Activated naive CD4-positive, alpha-beta T cell treated with anti-CD3 and anti-CD28 coated beads for 36 hours (primary cell): ENCODE measurements at regions of chr6 and their contacts with region 1.

Region 1: DNA sequence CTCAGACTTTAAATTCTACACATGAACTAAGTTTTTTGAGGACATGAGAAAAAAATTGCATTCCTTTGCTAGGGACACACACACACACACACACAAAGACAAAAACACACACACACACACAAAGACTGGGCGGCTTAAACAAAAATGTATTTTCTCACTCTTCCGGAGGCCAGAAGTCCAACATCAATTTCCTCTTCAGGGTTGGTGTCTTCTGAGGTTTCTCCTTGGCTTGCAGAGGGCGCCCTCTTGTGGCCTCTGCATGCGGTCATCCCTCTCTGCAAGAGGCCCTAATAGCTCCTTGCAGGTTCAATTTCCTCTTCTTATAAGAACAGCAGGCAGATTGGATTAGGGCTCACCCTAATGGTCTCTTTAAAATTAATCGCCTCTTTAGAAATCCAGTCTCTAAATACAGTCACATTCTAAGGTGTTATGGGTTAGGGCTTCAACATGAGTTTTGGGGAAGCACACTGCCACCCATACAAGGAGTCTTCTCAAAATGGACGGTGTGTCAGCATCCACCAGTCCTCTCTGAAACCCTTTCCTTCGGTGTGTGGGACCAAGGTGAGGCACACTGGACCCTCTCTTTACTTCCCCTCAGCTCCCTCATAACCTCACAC is 61.4 kb downstream of the GPR6 start:
- DNase-seq: peak; percentile 92
- H3K4me3 Mint-ChIP-seq: peak overlapping the region; percentile 84
- H3K27ac Mint-ChIP-seq: peak overlapping the region; percentile 96
- H3K4me1 Mint-ChIP-seq: peaks cover 12% of the 10 kb centered on the region
- H3K27me3 Mint-ChIP-seq: no peaks in the 10 kb centered on the region

Region 2: GRCh38 chr6:109187399-109188114 is 851.9 kb before region 1 on chr6:
- CTCF ChIA-PET with region 1: interaction called, 3 read pairs
- intact Hi-C with region 1: loop called (anchors 1 kb)
- DNase-seq: peak; percentile 70
- H3K4me3 Mint-ChIP-seq: no peak overlapping the region
- H3K27ac Mint-ChIP-seq: no peak overlapping the region
- H3K4me1 Mint-ChIP-seq: no peaks in the 10 kb centered on the region
- H3K27me3 Mint-ChIP-seq: peaks cover 11% of the 10 kb centered on the region

Region 3: DNA sequence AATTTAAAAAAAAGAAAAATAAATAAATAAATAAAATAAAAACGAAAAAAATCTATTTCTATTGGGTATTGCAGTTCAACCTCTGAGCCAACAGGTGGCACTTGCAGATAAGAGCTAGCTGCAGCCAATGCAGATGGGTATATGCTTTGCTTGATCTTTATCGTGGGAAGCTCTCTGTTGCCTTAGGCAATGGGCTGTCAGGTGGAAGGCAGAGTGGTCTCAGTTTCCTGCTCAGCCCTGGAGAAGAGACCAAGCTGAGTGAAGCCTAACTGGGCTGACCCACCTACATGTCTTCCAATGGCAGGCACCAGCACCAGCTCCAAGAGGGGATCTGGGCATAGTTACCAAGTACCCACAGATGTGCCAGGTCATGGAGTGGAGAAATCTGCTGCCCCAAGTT is 443.5 kb before region 1 on chr6:
- CTCF ChIA-PET with region 1: interaction called, 23 read pairs
- intact Hi-C with region 1: loop called (anchors 1 kb)
- DNase-seq: peak; percentile 22
- H3K4me3 Mint-ChIP-seq: no peak overlapping the region
- H3K27ac Mint-ChIP-seq: no peak overlapping the region
- H3K4me1 Mint-ChIP-seq: peaks cover 4% of the 10 kb centered on the region
- H3K27me3 Mint-ChIP-seq: no peaks in the 10 kb centered on the region

Region 4: GRCh38 chr6:109705258-109705657 is 334.2 kb before region 1 on chr6:
- CTCF ChIA-PET with region 1: interaction called, 134 read pairs
- intact Hi-C with region 1: loop called (anchors 1 kb)
- DNase-seq: peak; percentile 91
- H3K4me3 Mint-ChIP-seq: no peak overlapping the region
- H3K27ac Mint-ChIP-seq: no peak overlapping the region
- H3K4me1 Mint-ChIP-seq: peaks cover 9% of the 10 kb centered on the region
- H3K27me3 Mint-ChIP-seq: no peaks in the 10 kb centered on the region

Region 5: DNA sequence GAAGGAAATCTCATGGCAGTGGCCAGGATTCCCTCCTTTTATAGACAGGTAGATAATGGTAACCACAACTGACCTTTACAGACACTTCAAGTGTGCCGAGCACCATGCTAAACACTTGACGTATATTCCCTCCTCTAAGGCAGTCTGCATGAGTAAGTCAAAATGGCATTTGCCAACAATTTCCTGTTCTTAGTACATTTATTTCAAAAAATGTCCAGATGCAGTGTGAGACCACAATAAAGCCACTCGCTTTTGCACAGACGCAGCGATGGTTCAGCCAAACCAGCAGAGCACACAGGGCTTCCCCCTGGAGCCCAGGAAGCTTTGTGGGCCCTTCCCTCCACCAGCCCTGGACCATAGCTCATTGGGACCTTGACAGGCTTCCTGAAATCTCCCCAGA is 77.8 kb before region 1 on chr6:
- CTCF ChIA-PET with region 1: interaction called, 4 read pairs
- intact Hi-C with region 1: loop called (anchors 5 kb)
- DNase-seq: no peak
- H3K4me3 Mint-ChIP-seq: no peak overlapping the region
- H3K27ac Mint-ChIP-seq: no peak overlapping the region
- H3K4me1 Mint-ChIP-seq: no peaks in the 10 kb centered on the region
- H3K27me3 Mint-ChIP-seq: no peaks in the 10 kb centered on the region

Region 6: GRCh38 chr6:110029144-110029543 is 10.3 kb before region 1 on chr6:
- CTCF ChIA-PET with region 1: interaction called, 35 read pairs
- intact Hi-C with region 1: no loop called
- DNase-seq: no peak
- H3K4me3 Mint-ChIP-seq: no peak overlapping the region
- H3K27ac Mint-ChIP-seq: no peak overlapping the region
- H3K4me1 Mint-ChIP-seq: no peaks in the 10 kb centered on the region
- H3K27me3 Mint-ChIP-seq: no peaks in the 10 kb centered on the region

Region 7: GRCh38 chr6:110389689-110390382 is 350.4 kb after region 1 on chr6:
- CTCF ChIA-PET with region 1: interaction called, 74 read pairs
- intact Hi-C with region 1: loop called (anchors 1 kb)
- DNase-seq: no peak
- H3K4me3 Mint-ChIP-seq: no peak overlapping the region
- H3K27ac Mint-ChIP-seq: no peak overlapping the region
- H3K4me1 Mint-ChIP-seq: peaks cover 6% of the 10 kb centered on the region
- H3K27me3 Mint-ChIP-seq: no peaks in the 10 kb centered on the region